ENCODE measurements at regions of chr1 and their contacts with region 1.

Region 1: DNA sequence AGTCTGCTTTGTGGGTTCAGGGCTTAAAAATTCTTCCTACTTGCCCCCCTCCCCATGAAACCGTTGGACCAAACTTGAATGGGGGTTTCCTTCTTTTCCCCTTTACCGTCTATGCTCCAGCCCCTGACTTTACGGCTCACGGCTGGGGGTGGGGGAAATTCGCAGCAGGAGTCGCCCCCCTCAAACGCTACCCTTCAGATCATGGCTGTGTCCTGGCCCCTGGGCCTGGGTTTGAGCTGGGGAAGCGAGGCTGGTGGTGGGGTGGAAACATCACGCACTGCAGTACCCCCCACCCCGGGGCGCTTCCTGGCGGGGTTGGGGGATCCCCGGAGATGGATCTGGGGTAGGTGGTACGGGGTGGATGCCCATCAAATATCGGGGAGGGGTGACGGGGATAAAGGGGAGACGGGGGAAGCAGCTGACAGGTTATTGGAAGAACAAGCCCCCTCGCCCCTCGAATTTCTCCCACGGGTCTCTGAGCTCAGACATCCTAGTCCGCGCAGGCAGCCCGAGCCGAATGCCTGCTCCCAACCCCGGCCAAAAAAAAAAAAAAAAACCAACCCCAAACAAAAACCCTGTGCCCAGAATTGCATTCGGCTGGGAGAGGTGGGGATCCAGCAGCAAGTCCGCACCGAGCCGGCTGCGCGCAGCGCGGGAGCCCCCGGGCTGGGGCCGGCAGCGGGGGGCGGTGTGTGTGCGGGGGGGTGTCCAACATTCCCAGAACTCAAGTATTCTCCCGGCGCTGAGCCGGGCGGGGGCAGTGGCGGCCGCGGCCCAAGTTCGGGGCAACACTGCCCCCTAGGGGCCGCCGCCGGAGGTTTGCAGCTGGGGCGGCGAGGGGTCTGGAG is 59.0 kb upstream of the ACOT11 start:
- DNase-seq: peak; percentile 83
- ATAC-seq: peak; percentile 68
- H3K4me3 ChIP-seq: peak overlapping the region; percentile 64 to 82 (median 74)
- H3K4me3 Mint-ChIP-seq: peak overlapping the region; percentile 85
- H3K27ac ChIP-seq: peak overlapping the region; percentile 18 to 76
- H3K27ac Mint-ChIP-seq: peak overlapping the region; percentile 78
- H3K4me1 ChIP-seq: peaks cover 17 to 37% of the 10 kb centered on the region in 2 donors
- H3K4me1 Mint-ChIP-seq: peaks cover 24% of the 10 kb centered on the region
- H3K27me3 ChIP-seq: peaks cover 0 to 11% (median 4%) of the 10 kb centered on the region in 4 experiments
- H3K27me3 Mint-ChIP-seq: peaks cover 12% of the 10 kb centered on the region
- CTCF ChIP-seq: peak; percentile 99

Region 2: GRCh38 chr1:53860967-53861411 is 628.0 kb before region 1 on chr1:
- CTCF ChIA-PET with region 1: interaction called, 10 read pairs
- POLR2A ChIA-PET with region 1: no interaction called
- intact Hi-C with region 1: loop called (anchors 1 kb)
- DNase-seq: peak; percentile 70
- ATAC-seq: peak; percentile 62
- H3K4me3 ChIP-seq: no peak overlapping the region
- H3K4me3 Mint-ChIP-seq: no peak overlapping the region
- H3K27ac ChIP-seq: no peak overlapping the region
- H3K27ac Mint-ChIP-seq: no peak overlapping the region
- H3K4me1 ChIP-seq: peaks cover 10 to 15% of the 10 kb centered on the region in 2 donors
- H3K4me1 Mint-ChIP-seq: peaks cover 23% of the 10 kb centered on the region
- H3K27me3 ChIP-seq: no peaks in the 10 kb centered on the region
- H3K27me3 Mint-ChIP-seq: no peaks in the 10 kb centered on the region
- CTCF ChIP-seq: peak; percentile 90

Region 3: DNA sequence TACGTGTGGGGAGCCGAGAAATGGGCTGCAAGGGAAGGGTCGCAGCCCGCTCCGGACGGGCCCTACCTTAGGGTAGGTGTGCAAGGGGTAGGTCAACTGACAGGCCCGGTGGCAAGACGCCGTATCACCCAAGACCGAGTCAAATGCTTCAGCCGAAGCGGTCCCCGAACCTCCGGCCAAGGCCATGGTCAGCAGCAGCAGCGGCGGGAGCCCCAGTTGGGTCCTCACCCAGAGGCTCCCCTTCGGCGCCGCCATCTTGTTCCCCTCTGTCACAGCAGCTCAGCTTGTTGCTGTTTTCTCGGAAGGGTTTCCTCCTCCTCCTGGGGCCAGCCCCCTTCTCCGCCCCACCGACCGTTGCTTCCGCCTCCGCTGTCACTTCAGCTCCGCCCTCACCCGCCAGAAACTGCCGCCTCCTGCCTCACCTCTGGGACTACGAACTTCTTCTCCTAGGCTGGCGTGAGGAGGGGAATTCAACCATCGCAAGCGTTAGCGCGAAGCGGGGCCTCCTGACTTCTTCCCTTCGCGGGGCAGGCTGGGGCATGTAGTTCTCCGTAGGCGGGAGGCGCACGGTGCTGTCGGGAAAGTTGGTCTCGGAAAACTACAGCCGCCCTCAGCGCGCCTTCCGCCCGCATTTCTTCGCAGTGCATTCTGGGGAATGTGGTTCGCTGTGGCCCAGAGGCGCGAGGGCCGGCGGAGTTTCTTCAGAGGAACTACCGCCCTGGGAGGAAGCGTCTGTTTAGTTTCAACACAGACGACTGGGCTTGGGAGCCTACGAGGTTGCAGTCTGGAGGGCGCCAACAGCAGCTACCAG is 435.9 kb before region 1 on chr1 and contains the starts of genes TCEANC2 and TMEM59:
- CTCF ChIA-PET with region 1: interaction called, 3 read pairs
- POLR2A ChIA-PET with region 1: interaction called, 5 read pairs
- intact Hi-C with region 1: loop called (anchors 1 kb)
- DNase-seq: peak; percentile 99
- ATAC-seq: peak; percentile 91
- H3K4me3 ChIP-seq: peak within 1 kb of the TSS; percentile 65 to 99 (median 93)
- H3K4me3 Mint-ChIP-seq: no peak within 1 kb of the TSS
- H3K27ac ChIP-seq: peak within 1 kb of the TSS; percentile 75 to 94
- H3K27ac Mint-ChIP-seq: peak within 1 kb of the TSS; percentile 60
- H3K4me1 ChIP-seq: peaks cover 36% of the 10 kb centered on the region in 2 donors
- H3K4me1 Mint-ChIP-seq: peaks cover 36% of the 10 kb centered on the region
- H3K27me3 ChIP-seq: no peaks in the 10 kb centered on the region
- H3K27me3 Mint-ChIP-seq: no peaks in the 10 kb centered on the region
- CTCF ChIP-seq: no peak
- total RNA-seq, gene TCEANC2: 13.5 and 15.9 TPM in 2 replicates
- total RNA-seq, gene TMEM59: 146 and 152 TPM in 2 replicates

Region 4: GRCh38 chr1:54121482-54122134 is 367.4 kb before region 1 on chr1:
- CTCF ChIA-PET with region 1: interaction called, 19 read pairs
- POLR2A ChIA-PET with region 1: no interaction called
- intact Hi-C with region 1: loop called (anchors 2 kb)
- DNase-seq: peak; percentile 59
- ATAC-seq: no peak
- H3K4me3 ChIP-seq: no peak overlapping the region
- H3K4me3 Mint-ChIP-seq: no peak overlapping the region
- H3K27ac ChIP-seq: no peak overlapping the region
- H3K27ac Mint-ChIP-seq: no peak overlapping the region
- H3K4me1 ChIP-seq: peaks cover 0 to 5% of the 10 kb centered on the region in 2 donors
- H3K4me1 Mint-ChIP-seq: peaks cover 3% of the 10 kb centered on the region
- H3K27me3 ChIP-seq: peaks cover 0 to 16% (median 0%) of the 10 kb centered on the region in 4 experiments
- H3K27me3 Mint-ChIP-seq: peaks cover 8% of the 10 kb centered on the region
- CTCF ChIP-seq: peak; percentile 35

Region 5: GRCh38 chr1:54310439-54311328 is 178.3 kb before region 1 on chr1:
- CTCF ChIA-PET with region 1: interaction called, 3 read pairs
- POLR2A ChIA-PET with region 1: no interaction called
- intact Hi-C with region 1: loop called (anchors 5 kb)
- DNase-seq: no peak
- ATAC-seq: no peak
- H3K4me3 ChIP-seq: no peak overlapping the region
- H3K4me3 Mint-ChIP-seq: no peak overlapping the region
- H3K27ac ChIP-seq: no peak overlapping the region
- H3K27ac Mint-ChIP-seq: no peak overlapping the region
- H3K4me1 ChIP-seq: no peaks in the 10 kb centered on the region
- H3K4me1 Mint-ChIP-seq: peaks cover 2% of the 10 kb centered on the region
- H3K27me3 ChIP-seq: no peaks in the 10 kb centered on the region
- H3K27me3 Mint-ChIP-seq: no peaks in the 10 kb centered on the region
- CTCF ChIP-seq: no peak

Region 6: DNA sequence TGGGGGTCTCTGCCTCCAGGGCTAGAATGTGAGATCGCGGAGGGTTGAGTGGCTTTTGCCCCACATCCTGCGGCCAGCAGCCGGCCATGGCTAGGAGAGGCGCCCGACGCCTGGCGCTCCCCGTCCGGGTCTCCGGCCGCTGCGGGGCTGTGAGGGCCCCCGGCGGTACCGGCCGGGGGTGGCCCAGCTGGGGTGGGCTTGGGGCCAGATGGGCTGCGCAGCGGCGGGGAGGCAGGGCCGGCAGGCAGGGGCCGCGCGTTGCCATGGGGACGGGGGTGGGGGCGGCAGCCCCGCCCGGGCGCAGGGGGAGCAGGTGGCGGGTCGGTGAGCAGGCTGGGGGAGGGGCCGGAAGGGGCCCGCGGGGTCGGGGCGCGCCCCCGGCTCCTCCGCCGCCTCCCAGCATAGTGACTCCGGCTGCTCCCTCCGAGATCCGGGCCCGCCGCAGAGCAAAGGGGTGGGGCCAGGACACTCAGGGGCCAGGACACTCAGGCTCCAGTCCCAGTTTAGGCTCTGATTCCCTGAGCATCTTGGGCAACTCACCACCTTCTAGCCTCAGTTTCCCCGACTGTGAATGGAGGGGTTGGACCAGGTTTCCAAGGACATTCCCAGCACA is 14.3 kb before region 1 on chr1:
- CTCF ChIA-PET with region 1: interaction called, 14 read pairs
- POLR2A ChIA-PET with region 1: interaction called, 4 read pairs
- intact Hi-C with region 1: loop called (anchors 2 kb)
- DNase-seq: peak; percentile 39
- ATAC-seq: peak; percentile 44
- H3K4me3 ChIP-seq: peak overlapping the region; percentile 42 to 62 (median 50)
- H3K4me3 Mint-ChIP-seq: peak overlapping the region; percentile 85
- H3K27ac ChIP-seq: peak overlapping the region in 1 of 2 donors; percentile 63
- H3K27ac Mint-ChIP-seq: peak overlapping the region; percentile 56
- H3K4me1 ChIP-seq: peaks cover 35 to 39% of the 10 kb centered on the region in 2 donors
- H3K4me1 Mint-ChIP-seq: peaks cover 38% of the 10 kb centered on the region
- H3K27me3 ChIP-seq: peaks cover 0 to 18% (median 3%) of the 10 kb centered on the region in 4 experiments
- H3K27me3 Mint-ChIP-seq: peaks cover 12% of the 10 kb centered on the region
- CTCF ChIP-seq: no peak

Region 7: DNA sequence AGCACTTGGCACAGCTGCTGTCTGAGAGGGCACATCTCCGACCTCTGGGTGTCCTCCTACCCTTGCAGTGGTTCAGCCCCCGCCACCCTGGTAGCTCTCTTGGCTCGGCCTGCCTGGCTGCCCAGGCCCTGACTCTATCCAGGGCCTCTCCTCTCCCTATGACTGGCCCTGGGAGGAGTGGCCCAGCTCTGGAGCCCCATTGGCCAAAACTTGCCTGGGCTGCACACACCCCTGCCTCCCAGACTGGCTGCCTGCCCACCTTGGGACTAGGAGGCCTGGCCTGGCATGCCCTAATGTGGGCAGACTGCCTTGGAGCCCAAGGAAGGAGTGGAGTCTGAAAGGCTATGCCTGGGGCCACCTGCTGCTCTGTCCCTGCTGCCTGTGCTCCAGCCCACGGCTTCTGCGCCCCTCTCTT is 92.6 kb after region 1 on chr1:
- CTCF ChIA-PET with region 1: no interaction called
- POLR2A ChIA-PET with region 1: no interaction called
- intact Hi-C with region 1: no loop called
- DNase-seq: no peak
- ATAC-seq: no peak
- H3K4me3 ChIP-seq: no peak overlapping the region
- H3K4me3 Mint-ChIP-seq: no peak overlapping the region
- H3K27ac ChIP-seq: no peak overlapping the region
- H3K27ac Mint-ChIP-seq: no peak overlapping the region
- H3K4me1 ChIP-seq: no peaks in the 10 kb centered on the region
- H3K4me1 Mint-ChIP-seq: no peaks in the 10 kb centered on the region
- H3K27me3 ChIP-seq: no peaks in the 10 kb centered on the region
- H3K27me3 Mint-ChIP-seq: no peaks in the 10 kb centered on the region
- CTCF ChIP-seq: no peak

Measured in B cell (primary cell).